Natural killer cell (primary cell): ENCODE measurements at regions of chr3 and their contacts with region 1.

Region 1: GRCh38 chr3:50260027-50260941 is 8.7 kb upstream of the SEMA3B start:
- DNase-seq: peak; percentile 92
- ATAC-seq: peak; percentile 95 to 98 (median 95)
- H3K4me3 ChIP-seq: peak overlapping the region; percentile 44
- H3K4me3 Mint-ChIP-seq: peak overlapping the region; percentile 77
- H3K27ac ChIP-seq: peak overlapping the region; percentile 77
- H3K27ac Mint-ChIP-seq: peak overlapping the region; percentile 71 to 84
- H3K4me1 ChIP-seq: peaks cover 20% of the 10 kb centered on the region
- H3K4me1 Mint-ChIP-seq: peaks cover 5 to 16% of the 10 kb centered on the region in 2 donors
- H3K27me3 ChIP-seq: no peaks in the 10 kb centered on the region
- H3K27me3 Mint-ChIP-seq: no peaks in the 10 kb centered on the region
- CTCF ChIP-seq: peak; percentile 92

Region 2: GRCh38 chr3:49411535-49411967 is 848.7 kb before region 1 on chr3:
- intact Hi-C with region 1: no loop called
- DNase-seq: peak; percentile 66 to 71
- ATAC-seq: peak; percentile 11 to 31 (median 17)
- H3K4me3 ChIP-seq: peak overlapping the region; percentile 66
- H3K4me3 Mint-ChIP-seq: peak overlapping the region; percentile 91
- H3K27ac ChIP-seq: peak overlapping the region; percentile 89
- H3K27ac Mint-ChIP-seq: peak overlapping the region; percentile 97 to 99
- H3K4me1 ChIP-seq: peaks cover 68% of the 10 kb centered on the region
- H3K4me1 Mint-ChIP-seq: peaks cover 66 to 70% of the 10 kb centered on the region in 2 donors
- H3K27me3 ChIP-seq: no peaks in the 10 kb centered on the region
- H3K27me3 Mint-ChIP-seq: no peaks in the 10 kb centered on the region
- CTCF ChIP-seq: no peak

Region 3: DNA sequence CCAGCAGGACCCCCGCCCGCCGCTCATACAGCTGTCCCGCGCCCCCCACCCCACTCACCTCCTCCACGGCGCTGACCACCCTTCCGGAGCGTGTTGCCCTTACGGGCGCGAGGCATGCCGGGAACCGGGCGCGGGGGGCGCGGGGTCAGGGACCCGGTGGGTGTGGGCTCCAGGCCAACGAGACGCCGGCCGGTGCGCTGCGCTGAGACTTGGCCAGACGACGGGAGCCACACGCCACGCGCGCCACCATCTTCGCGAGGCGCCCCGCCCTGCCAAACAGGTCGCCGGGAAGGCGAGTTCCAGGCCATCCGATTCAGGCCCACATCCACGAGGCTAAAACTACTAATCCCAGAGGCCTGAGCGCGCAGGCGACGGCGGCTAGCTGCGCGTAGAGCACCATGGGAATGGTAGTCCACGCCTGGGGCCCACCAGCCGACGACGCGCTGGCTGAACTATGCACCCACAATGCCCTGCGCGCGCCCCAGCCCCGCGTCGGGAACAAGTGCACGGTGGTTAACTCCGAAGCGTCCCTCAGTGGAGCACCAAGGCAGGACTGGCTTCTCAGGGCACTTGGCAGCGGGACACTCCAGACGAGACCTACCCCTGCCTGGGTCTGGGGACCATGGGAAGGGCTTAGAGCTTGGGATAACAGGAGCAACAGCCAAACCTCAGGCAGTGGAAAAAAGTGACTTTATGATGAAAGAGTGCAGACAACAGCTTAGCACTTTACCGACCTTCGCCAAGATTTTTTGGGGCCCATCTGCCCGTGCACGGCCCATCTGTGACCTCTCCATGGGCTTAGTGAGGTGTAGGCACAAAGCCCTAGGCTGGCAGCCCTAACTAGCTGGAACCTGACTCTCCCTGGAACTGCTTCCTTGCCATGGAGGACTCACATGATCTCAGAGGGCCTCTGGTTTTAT is 32.1 kb after region 1 on chr3 and contains the start of gene IFRD2:
- intact Hi-C with region 1: loop called (anchors 1 kb)
- DNase-seq: peak; percentile 90 to 98
- ATAC-seq: peak; percentile 98 to 99 (median 98)
- H3K4me3 ChIP-seq: peak within 1 kb of the TSS; percentile 62
- H3K4me3 Mint-ChIP-seq: peak within 1 kb of the TSS; percentile 91
- H3K27ac ChIP-seq: peak within 1 kb of the TSS; percentile 57
- H3K27ac Mint-ChIP-seq: peak within 1 kb of the TSS; percentile 93 to 96
- H3K4me1 ChIP-seq: peaks cover 18% of the 10 kb centered on the region
- H3K4me1 Mint-ChIP-seq: peaks cover 15 to 18% of the 10 kb centered on the region in 2 donors
- H3K27me3 ChIP-seq: no peaks in the 10 kb centered on the region
- H3K27me3 Mint-ChIP-seq: no peaks in the 10 kb centered on the region
- CTCF ChIP-seq: no peak
- total RNA-seq, gene IFRD2: 27.8 to 39.1 (median 32.1) TPM

Region 4: DNA sequence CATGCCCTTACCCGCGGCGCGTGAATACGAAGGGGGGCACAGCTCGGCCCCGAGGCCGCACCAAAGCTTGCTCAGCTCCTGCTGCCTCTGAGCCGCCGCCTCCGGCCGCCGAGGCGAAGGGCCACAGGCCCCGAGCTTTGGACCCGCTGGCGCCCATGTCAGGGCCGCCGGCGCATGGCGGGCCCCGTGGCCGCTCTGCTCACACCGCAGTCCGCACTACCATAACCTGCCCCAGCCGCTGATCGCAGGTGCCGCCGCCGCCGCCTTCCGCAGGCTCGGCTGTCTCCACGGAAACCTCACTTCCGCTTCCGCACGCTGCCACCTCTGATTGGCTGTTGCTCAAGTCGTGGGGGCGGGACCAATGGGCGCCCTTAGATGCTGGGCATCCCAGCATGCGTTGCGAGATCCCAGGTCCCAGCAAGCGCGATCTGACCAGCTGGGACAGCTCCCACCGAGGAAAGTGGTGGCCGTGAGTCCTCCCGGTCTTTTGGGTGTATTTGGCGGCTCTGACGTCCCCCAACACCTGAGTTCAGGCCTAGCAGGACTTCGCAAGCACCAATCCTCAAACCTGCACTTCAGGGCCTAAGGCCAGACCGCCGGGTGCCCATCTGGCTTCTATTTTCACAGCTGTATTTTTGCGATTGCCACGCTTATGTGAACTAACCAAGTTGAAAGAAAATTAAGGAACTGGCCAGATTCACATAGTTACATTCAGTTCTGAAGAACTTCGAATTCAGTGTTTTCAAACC is 67.8 kb after region 1 on chr3 and contains the start of gene TUSC2:
- intact Hi-C with region 1: no loop called
- DNase-seq: peak; percentile 94 to 98
- ATAC-seq: peak; percentile 96 to 97 (median 97)
- H3K4me3 ChIP-seq: peak within 1 kb of the TSS; percentile 69
- H3K4me3 Mint-ChIP-seq: peak within 1 kb of the TSS; percentile 85
- H3K27ac ChIP-seq: peak within 1 kb of the TSS; percentile 71
- H3K27ac Mint-ChIP-seq: peak within 1 kb of the TSS; percentile 85 to 87
- H3K4me1 ChIP-seq: peaks cover 39% of the 10 kb centered on the region
- H3K4me1 Mint-ChIP-seq: peaks cover 10 to 45% of the 10 kb centered on the region in 2 donors
- H3K27me3 ChIP-seq: no peaks in the 10 kb centered on the region
- H3K27me3 Mint-ChIP-seq: no peaks in the 10 kb centered on the region
- CTCF ChIP-seq: no peak
- total RNA-seq, gene TUSC2: 18.4 to 23.4 (median 21.3) TPM

Region 5: GRCh38 chr3:50418850-50419249 is 158.6 kb after region 1 on chr3:
- intact Hi-C with region 1: no loop called
- DNase-seq: no peak
- ATAC-seq: no peak
- H3K4me3 ChIP-seq: no peak overlapping the region
- H3K4me3 Mint-ChIP-seq: no peak overlapping the region
- H3K27ac ChIP-seq: no peak overlapping the region
- H3K27ac Mint-ChIP-seq: no peak overlapping the region
- H3K4me1 ChIP-seq: peaks cover 49% of the 10 kb centered on the region
- H3K4me1 Mint-ChIP-seq: peaks cover 40 to 62% of the 10 kb centered on the region in 2 donors
- H3K27me3 ChIP-seq: no peaks in the 10 kb centered on the region
- H3K27me3 Mint-ChIP-seq: no peaks in the 10 kb centered on the region
- CTCF ChIP-seq: no peak